Naive thymus-derived CD4-positive, alpha-beta T cell (primary cell): ENCODE measurements at regions of chr13 and their contacts with region 1.

Region 1: DNA sequence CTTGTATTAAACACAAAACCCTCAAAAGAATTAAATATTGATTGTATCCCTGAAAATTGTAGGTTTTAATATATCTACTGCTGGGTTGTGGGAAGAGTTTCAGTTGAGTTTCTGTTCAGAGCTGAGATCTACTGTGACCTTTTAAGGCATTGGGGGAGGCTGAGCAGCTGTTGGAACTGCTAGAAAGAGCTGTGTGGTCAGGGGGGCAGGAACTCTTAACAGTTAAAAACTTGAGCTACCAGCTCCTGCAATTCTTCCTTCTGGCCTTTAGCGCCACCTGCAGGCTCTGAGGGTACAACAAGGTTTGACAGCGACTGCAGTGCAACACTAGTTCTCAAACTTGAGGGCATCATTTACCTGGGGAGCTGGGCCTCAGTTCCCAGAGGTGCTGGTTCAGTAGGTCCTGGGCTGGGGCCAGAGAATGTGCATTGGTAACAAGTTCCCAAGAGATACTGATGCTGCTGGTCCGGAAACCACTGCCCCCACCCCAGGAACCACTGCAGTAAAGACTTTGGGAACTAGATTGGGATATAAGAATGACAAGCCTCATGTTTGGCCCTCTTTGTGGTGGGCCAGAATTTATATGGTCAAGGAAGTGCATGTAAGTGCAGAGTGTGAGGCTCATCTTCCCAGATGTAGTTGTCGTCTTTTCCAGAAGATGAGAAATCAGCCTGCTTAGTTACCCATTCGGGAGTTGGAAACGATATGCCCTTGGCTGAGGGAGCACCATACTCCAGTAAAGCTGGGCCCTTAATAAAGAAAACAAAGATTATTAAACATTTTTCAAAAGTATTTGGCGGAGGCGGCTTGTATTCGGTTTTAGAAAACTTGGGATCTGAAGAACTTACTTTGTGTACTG is 2.6 kb downstream of the RNASEH2B start:
- DNase-seq: peak; percentile 72 to 86 (median 82)
- ATAC-seq: peak; percentile 73
- H3K4me3 ChIP-seq: peak overlapping the region; percentile 86
- H3K4me3 Mint-ChIP-seq: peak overlapping the region; percentile 72 to 99 (median 93)
- H3K27ac ChIP-seq: peak overlapping the region; percentile 86
- H3K27ac Mint-ChIP-seq: peak overlapping the region; percentile 72 to 98 (median 92)
- H3K4me1 ChIP-seq: peaks cover 15 to 28% of the 10 kb centered on the region in 2 donors
- H3K4me1 Mint-ChIP-seq: peaks cover 34 to 70% (median 62%) of the 10 kb centered on the region in 7 donors
- H3K27me3 ChIP-seq: no peaks in the 10 kb centered on the region
- H3K27me3 Mint-ChIP-seq: no peaks in the 10 kb centered on the region

Region 2: GRCh38 chr13:49792550-49793324 is 1119.4 kb before region 1 on chr13 and contains the start of gene KPNA3:
- CTCF ChIA-PET with region 1: no interaction called
- POLR2A ChIA-PET with region 1: no interaction called
- intact Hi-C with region 1: loop called in 1 of 2 experiments (anchors 1 kb)
- DNase-seq: peak; percentile 86 to 97 (median 95)
- ATAC-seq: peak; percentile 93
- H3K4me3 ChIP-seq: peak within 1 kb of the TSS; percentile 96
- H3K4me3 Mint-ChIP-seq: peak within 1 kb of the TSS; percentile 87 to 99 (median 96)
- H3K27ac ChIP-seq: peak within 1 kb of the TSS; percentile 80
- H3K27ac Mint-ChIP-seq: peak within 1 kb of the TSS; percentile 91 to 98 (median 96)
- H3K4me1 ChIP-seq: peaks cover 19 to 23% of the 10 kb centered on the region in 2 donors
- H3K4me1 Mint-ChIP-seq: peaks cover 19 to 42% (median 31%) of the 10 kb centered on the region in 7 donors
- H3K27me3 ChIP-seq: no peaks in the 10 kb centered on the region
- H3K27me3 Mint-ChIP-seq: peaks cover 2 to 8% (median 3%) of the 10 kb centered on the region in 5 donors
- total RNA-seq, gene KPNA3: 17.0 to 38.7 (median 19.6) TPM

Region 3: GRCh38 chr13:50081679-50082425 is 830.3 kb before region 1 on chr13:
- CTCF ChIA-PET with region 1: interaction called, 45 read pairs
- POLR2A ChIA-PET with region 1: interaction called, 7 read pairs
- intact Hi-C with region 1: loop called (anchors 1 kb)
- DNase-seq: peak; percentile 94 to 99 (median 99)
- ATAC-seq: peak; percentile 88
- H3K4me3 ChIP-seq: peak overlapping the region; percentile 63
- H3K4me3 Mint-ChIP-seq: peak overlapping the region; percentile 90 to 100 (median 95)
- H3K27ac ChIP-seq: peak overlapping the region; percentile 86
- H3K27ac Mint-ChIP-seq: peak overlapping the region; percentile 88 to 99 (median 94)
- H3K4me1 ChIP-seq: peaks cover 17% of the 10 kb centered on the region in 2 donors
- H3K4me1 Mint-ChIP-seq: peaks cover 13 to 63% (median 49%) of the 10 kb centered on the region in 7 donors
- H3K27me3 ChIP-seq: peaks cover 0 to 8% of the 10 kb centered on the region in 2 donors
- H3K27me3 Mint-ChIP-seq: peaks cover 0 to 11% (median 7%) of the 10 kb centered on the region in 5 donors

Region 4: GRCh38 chr13:50387051-50387581 is 525.0 kb before region 1 on chr13:
- CTCF ChIA-PET with region 1: no interaction called
- POLR2A ChIA-PET with region 1: no interaction called
- intact Hi-C with region 1: loop called in 1 of 2 experiments (anchors 5 kb)
- DNase-seq: peak in 2 of 9 donors; percentile 16 to 24
- ATAC-seq: peak; percentile 47
- H3K4me3 ChIP-seq: no peak overlapping the region
- H3K4me3 Mint-ChIP-seq: no peak overlapping the region
- H3K27ac ChIP-seq: no peak overlapping the region
- H3K27ac Mint-ChIP-seq: no peak overlapping the region
- H3K4me1 ChIP-seq: peaks cover 0 to 6% of the 10 kb centered on the region in 2 donors
- H3K4me1 Mint-ChIP-seq: peaks cover 0 to 5% (median 0%) of the 10 kb centered on the region in 7 donors
- H3K27me3 ChIP-seq: no peaks in the 10 kb centered on the region
- H3K27me3 Mint-ChIP-seq: peaks cover 0 to 39% (median 0%) of the 10 kb centered on the region in 5 donors

Region 5: DNA sequence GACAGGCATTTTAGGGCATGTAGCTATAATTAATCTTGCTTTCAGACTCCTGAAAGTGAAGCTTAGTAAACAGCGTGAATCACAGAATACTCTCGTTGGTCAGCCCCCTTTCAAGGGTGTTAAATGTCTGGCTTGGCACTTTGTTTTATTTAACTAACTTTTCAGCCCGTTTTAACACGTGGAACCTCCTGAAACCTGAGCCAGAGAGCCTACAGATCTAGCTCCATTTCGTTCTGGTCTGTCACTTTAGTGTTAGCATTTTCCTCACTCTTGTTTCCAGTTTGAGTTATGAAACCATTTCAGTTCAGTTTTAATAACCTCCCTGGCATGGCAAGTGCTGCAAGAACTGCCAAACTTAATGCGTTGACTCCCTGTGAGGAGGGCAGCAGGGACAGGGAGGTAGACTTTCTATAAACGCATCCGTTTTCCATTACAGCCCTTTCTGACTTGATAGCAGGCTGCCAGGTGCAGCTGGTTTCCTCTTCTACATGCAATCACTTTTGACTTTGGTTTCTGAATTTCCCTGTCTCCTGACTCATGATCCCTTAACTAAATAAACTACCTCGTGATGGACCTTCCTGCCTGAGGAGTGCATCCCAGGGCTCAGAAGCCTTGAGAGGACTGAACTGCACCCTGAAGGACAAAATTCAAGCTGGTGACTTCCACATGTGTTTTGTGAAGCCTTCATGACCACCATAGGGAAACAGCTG is 261.4 kb before region 1 on chr13:
- CTCF ChIA-PET with region 1: no interaction called
- POLR2A ChIA-PET with region 1: no interaction called
- intact Hi-C with region 1: loop called in 1 of 2 experiments (anchors 10 kb)
- DNase-seq: no peak
- ATAC-seq: no peak
- H3K4me3 ChIP-seq: no peak overlapping the region
- H3K4me3 Mint-ChIP-seq: no peak overlapping the region
- H3K27ac ChIP-seq: no peak overlapping the region
- H3K27ac Mint-ChIP-seq: no peak overlapping the region
- H3K4me1 ChIP-seq: no peaks in the 10 kb centered on the region
- H3K4me1 Mint-ChIP-seq: peaks cover 0 to 8% (median 4%) of the 10 kb centered on the region in 7 donors
- H3K27me3 ChIP-seq: no peaks in the 10 kb centered on the region
- H3K27me3 Mint-ChIP-seq: peaks cover 5 to 30% (median 8%) of the 10 kb centered on the region in 5 donors

Region 6: GRCh38 chr13:50893211-50893852 is 18.8 kb before region 1 on chr13:
- CTCF ChIA-PET with region 1: interaction called, 28 read pairs
- POLR2A ChIA-PET with region 1: interaction called, 122 read pairs
- intact Hi-C with region 1: loop called (anchors 1 kb)
- DNase-seq: peak in 7 of 9 donors; percentile 34 to 68 (median 55)
- ATAC-seq: peak; percentile 91
- H3K4me3 ChIP-seq: peak overlapping the region; percentile 30
- H3K4me3 Mint-ChIP-seq: peak overlapping the region; percentile 67 to 88 (median 82)
- H3K27ac ChIP-seq: peak overlapping the region; percentile 69
- H3K27ac Mint-ChIP-seq: peak overlapping the region; percentile 82 to 98 (median 95)
- H3K4me1 ChIP-seq: peaks cover 16 to 27% of the 10 kb centered on the region in 2 donors
- H3K4me1 Mint-ChIP-seq: peaks cover 26 to 50% (median 47%) of the 10 kb centered on the region in 7 donors
- H3K27me3 ChIP-seq: no peaks in the 10 kb centered on the region
- H3K27me3 Mint-ChIP-seq: no peaks in the 10 kb centered on the region

Region 7: DNA sequence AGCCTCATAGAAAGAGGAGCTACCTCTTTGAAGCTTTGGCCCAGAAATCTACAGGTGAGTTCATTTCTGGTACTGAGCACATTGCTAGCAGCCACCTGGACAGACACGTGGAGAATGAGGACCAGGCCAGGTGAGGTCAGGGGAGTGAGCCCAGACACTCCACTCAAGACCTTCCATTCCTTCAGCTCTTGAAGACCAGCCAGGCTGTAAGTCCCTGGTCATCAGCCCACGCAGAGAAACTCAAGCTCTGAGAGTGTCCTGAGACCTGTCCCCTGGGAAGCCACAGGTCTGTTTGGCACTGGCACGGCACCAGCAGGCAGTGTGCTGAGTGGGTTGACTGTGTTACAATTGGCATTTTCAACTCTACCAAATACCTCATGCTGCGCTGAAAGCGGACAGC is 171.5 kb after region 1 on chr13:
- CTCF ChIA-PET with region 1: no interaction called
- POLR2A ChIA-PET with region 1: no interaction called
- intact Hi-C with region 1: no loop called
- DNase-seq: no peak
- ATAC-seq: no peak
- H3K4me3 ChIP-seq: no peak overlapping the region
- H3K4me3 Mint-ChIP-seq: no peak overlapping the region
- H3K27ac ChIP-seq: no peak overlapping the region
- H3K27ac Mint-ChIP-seq: no peak overlapping the region
- H3K4me1 ChIP-seq: no peaks in the 10 kb centered on the region
- H3K4me1 Mint-ChIP-seq: peaks cover 0 to 4% (median 0%) of the 10 kb centered on the region in 7 donors
- H3K27me3 ChIP-seq: no peaks in the 10 kb centered on the region
- H3K27me3 Mint-ChIP-seq: peaks cover 0 to 14% (median 4%) of the 10 kb centered on the region in 5 donors

Region 8: GRCh38 chr13:52450012-52450792 is 1538.0 kb after region 1 on chr13 and contains the start of gene VPS36:
- CTCF ChIA-PET with region 1: no interaction called
- POLR2A ChIA-PET with region 1: no interaction called
- intact Hi-C with region 1: loop called in 1 of 2 experiments (anchors 10 kb)
- DNase-seq: peak; percentile 85 to 99 (median 95)
- ATAC-seq: peak; percentile 85
- H3K4me3 ChIP-seq: peak within 1 kb of the TSS; percentile 92
- H3K4me3 Mint-ChIP-seq: peak within 1 kb of the TSS; percentile 80 to 98 (median 94)
- H3K27ac ChIP-seq: peak within 1 kb of the TSS; percentile 88
- H3K27ac Mint-ChIP-seq: peak within 1 kb of the TSS; percentile 58 to 96 (median 90)
- H3K4me1 ChIP-seq: peaks cover 26 to 27% of the 10 kb centered on the region in 2 donors
- H3K4me1 Mint-ChIP-seq: peaks cover 17 to 52% (median 45%) of the 10 kb centered on the region in 7 donors
- H3K27me3 ChIP-seq: no peaks in the 10 kb centered on the region
- H3K27me3 Mint-ChIP-seq: peaks cover 0 to 3% (median 0%) of the 10 kb centered on the region in 5 donors
- total RNA-seq, gene VPS36: 40.4 to 53.7 (median 49.5) TPM